GM18951 (cell line): ENCODE measurements at regions of chr3 and their contacts with region 1.

Region 1: DNA sequence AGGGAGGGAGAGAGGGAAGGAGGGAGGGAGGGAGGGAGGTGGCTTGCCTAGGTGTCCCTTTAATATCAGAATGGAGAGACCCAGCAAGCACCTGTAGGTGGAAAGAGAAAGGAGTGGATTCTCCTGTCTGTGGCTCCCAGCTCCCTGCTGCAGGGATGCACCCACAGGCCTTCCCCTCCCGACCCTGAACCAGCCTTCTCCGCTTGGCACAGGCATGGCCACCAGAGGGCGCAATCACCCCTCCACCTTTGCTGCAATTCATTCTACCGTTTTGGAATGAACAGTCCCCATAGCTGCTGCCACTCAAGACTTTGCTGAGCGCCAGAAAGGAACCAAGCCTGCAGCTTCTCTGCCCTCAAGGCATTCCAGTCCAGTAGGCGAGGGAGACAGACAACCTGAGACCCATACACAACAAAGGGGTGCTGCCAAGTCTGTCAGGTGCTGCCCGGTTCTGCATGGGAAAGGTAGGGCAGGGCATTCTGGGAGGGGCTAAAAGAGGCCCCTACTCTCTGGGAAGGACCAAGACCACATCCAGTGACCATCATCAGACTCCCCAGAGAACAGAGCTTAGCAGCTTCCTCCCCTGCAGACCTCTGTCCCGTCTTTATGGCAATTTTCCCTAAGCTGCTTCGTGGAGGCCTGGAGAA is 4.9 kb downstream of the TLR9 start:
- POLR2A ChIP-seq: no peak

Region 2: DNA sequence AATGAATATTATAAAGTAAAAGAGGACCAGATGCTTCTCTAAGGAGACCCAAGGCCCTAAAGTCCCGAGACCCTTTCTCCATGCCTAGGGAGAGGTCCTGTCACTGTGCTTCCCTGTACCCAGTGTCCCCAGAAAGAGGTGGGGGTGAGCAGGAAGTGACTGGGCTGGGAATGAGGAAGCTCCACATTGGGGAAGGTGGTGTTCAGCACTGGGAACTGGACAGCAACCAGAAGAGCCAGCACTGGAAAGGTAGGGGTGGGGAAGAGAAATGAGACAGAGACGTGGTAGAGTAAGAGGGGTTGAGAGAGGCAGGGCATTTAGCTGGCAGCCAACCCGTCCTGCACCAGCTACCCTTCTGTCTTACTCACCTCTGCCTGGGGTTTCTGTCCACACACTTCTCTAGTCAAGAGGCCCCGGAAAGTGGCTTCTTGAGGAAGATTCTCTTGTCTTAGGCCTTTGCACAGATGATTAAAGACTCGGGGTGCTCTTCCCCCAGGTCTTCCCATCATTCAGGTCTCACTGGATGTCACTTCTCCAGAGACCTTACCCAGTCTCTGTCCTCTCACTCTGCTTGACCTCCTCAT is 291.0 kb before region 1 on chr3:
- in situ Hi-C with region 1: no loop called
- POLR2A ChIP-seq: no peak

Region 3: GRCh38 chr3:52339612-52340011 is 119.1 kb after region 1 on chr3:
- in situ Hi-C with region 1: loop called (anchors 10 kb)
- POLR2A ChIP-seq: no peak